ENCODE measurements at regions of chr6 and their contacts with region 1.

Region 1: DNA sequence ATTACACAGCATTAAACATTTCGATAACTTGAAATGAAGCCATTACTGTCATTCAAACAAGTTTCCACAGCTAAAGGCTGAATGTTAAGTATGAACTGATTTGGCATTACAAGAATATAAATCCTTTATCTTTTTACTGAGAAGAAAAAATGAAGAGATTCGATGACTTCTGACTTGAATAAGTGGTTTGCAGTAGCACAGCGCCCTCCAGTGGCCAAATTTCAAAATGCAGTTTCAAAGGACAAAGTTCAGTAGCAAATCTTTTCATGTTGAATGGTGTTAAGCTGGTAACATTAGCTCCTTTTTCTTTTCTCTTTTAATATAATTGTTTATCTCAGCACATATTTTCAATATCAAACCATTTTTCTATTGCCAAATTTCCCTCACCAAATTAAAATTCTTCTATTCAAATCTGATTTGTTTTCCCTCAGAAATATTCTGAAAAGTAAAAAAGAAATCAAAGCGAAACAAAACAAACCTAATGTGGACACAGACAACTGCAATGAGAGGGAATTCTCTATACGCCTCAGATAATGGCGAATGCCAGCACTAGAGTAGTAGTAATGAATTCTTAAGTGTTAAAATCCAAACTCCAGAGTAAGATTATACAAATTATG is 145.7 kb downstream of the BTBD9 start:
- DNase-seq: peak; percentile 57
- H3K4me3 ChIP-seq: no peak overlapping the region
- H3K27ac ChIP-seq: no peak overlapping the region
- H3K4me1 ChIP-seq: no peaks in the 10 kb centered on the region
- CTCF ChIP-seq: peak; percentile 99

Region 2: GRCh38 chr6:37791156-37791919 is 702.7 kb before region 1 on chr6:
- CTCF ChIA-PET with region 1: no interaction called
- POLR2A ChIA-PET with region 1: no interaction called
- intact Hi-C with region 1: loop called (anchors 2 kb)
- DNase-seq: peak; percentile 57
- H3K4me3 ChIP-seq: no peak overlapping the region
- H3K27ac ChIP-seq: no peak overlapping the region
- H3K4me1 ChIP-seq: no peaks in the 10 kb centered on the region
- CTCF ChIP-seq: peak; percentile 87

Region 3: DNA sequence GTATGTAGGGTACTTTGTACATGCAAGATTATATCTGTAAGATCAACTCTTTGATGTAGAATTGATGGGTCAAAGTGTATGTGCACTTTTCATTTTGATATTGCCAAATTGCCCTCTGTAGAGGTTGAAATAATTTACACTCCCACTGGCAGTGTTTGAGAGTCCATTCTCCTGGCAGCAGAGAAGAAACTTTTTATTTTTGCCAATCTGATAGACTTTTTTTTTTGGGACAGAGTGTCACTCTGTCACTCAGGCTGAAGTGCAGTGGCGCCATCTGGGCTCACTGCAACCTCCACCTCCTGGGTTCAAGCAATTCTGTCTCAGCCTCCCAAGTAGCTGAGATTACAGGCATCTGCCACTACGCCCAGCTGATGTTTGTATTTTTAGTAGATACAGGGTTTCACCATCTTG is 475.3 kb before region 1 on chr6:
- CTCF ChIA-PET with region 1: interaction called, 5 read pairs
- POLR2A ChIA-PET with region 1: no interaction called
- intact Hi-C with region 1: loop called (anchors 5 kb)
- DNase-seq: no peak
- H3K4me3 ChIP-seq: no peak overlapping the region
- H3K27ac ChIP-seq: no peak overlapping the region
- H3K4me1 ChIP-seq: no peaks in the 10 kb centered on the region
- CTCF ChIP-seq: no peak

Region 4: DNA sequence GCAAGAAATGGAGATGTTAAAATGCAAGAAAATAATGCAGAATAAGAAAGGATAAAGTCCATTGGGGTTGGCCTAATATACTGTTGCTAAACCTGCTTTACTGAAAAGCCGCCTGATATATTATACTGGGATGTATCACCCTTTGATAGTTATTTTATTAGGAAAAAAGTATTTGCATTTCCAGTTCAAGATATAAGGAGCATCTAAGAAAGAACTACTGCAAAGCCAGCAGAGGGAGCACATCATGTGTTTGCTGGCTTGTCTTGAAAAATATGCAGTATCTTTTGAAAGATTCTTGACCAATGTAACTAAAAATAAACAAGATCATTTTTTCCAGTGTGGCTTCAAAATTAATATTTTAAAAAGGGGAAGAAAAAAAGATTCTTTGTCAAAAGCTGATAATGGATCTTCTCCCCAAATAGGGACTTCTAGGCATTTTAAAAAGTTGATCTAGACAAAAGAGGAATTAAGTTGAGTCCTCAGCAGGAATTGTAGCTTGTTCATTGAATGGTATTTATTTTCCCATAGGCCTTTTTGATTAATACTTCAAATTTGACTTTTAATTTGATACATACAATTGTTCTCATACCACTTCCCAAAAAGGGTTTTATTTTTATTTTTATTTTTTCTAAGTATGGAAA is 459.6 kb before region 1 on chr6:
- CTCF ChIA-PET with region 1: no interaction called
- POLR2A ChIA-PET with region 1: interaction called, 4 read pairs
- intact Hi-C with region 1: loop called (anchors 1 kb)
- DNase-seq: peak; percentile 18
- H3K4me3 ChIP-seq: no peak overlapping the region
- H3K27ac ChIP-seq: no peak overlapping the region
- H3K4me1 ChIP-seq: no peaks in the 10 kb centered on the region
- CTCF ChIP-seq: peak; percentile 79

Region 5: GRCh38 chr6:38234934-38235682 is 258.9 kb before region 1 on chr6:
- CTCF ChIA-PET with region 1: no interaction called
- POLR2A ChIA-PET with region 1: no interaction called
- intact Hi-C with region 1: loop called (anchors 10 kb)
- DNase-seq: no peak
- H3K4me3 ChIP-seq: no peak overlapping the region
- H3K27ac ChIP-seq: no peak overlapping the region
- H3K4me1 ChIP-seq: no peaks in the 10 kb centered on the region
- CTCF ChIP-seq: no peak

Region 6: DNA sequence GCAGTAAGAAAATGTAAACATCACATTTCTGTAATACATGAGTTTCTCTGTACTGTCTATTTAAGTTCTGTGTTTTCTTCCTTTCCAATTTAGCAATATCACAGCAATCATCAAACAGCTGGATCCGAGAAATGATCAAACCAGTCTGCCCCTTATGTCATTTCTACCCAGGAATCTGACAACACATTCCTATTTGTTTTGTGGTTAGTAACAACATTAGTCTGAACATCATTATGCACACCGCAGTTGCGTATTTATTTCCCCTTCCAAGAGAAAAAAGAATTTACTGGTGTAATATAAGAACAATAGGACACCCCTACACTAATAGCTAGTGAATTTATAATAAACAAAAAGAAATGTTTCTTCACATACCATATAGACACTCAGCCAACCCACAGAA is 33.9 kb before region 1 on chr6:
- CTCF ChIA-PET with region 1: no interaction called
- POLR2A ChIA-PET with region 1: no interaction called
- intact Hi-C with region 1: no loop called
- DNase-seq: no peak
- H3K4me3 ChIP-seq: no peak overlapping the region
- H3K27ac ChIP-seq: no peak overlapping the region
- H3K4me1 ChIP-seq: no peaks in the 10 kb centered on the region
- CTCF ChIP-seq: no peak

Region 7: DNA sequence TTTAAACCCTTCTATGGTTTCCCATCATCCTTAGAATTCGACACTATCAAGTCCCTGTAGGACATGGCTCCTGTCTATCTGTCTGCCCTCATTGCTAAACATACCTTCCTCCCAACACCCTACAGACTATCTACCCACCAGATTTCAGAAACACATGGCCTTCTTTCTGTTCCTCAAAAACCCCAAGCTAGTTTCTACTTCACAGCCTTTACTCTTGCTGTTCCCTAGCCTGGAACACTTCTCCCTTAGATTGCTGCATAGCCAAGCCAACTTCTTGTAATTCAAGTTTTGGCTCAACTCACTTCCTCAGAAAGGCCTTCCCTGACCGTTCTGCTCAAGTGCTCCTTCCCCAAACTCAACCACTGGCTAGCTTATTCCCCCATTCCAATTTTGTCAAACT is 10.5 kb before region 1 on chr6:
- CTCF ChIA-PET with region 1: no interaction called
- POLR2A ChIA-PET with region 1: no interaction called
- intact Hi-C with region 1: no loop called
- DNase-seq: no peak
- H3K4me3 ChIP-seq: no peak overlapping the region
- H3K27ac ChIP-seq: no peak overlapping the region
- H3K4me1 ChIP-seq: no peaks in the 10 kb centered on the region
- CTCF ChIP-seq: no peak

Region 8: DNA sequence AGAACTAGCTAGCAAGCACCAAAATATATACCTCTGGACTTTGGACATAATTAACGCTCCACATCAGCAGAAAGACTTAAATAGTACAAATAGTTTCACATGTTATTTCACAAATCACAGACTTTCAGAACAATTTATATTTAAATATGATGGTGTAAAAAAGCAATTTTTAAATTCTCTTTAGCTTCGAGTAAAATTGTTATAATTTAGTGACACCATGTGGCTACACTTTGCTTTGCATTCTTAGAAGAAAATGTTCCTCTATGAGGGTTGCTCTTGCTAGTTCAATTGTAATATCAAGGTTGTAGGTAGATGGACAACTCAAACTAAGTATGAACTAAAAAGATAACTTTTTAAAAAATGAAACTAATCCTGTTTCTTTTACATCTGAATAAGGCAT is 76.7 kb after region 1 on chr6:
- CTCF ChIA-PET with region 1: no interaction called
- POLR2A ChIA-PET with region 1: no interaction called
- intact Hi-C with region 1: loop called (anchors 2 kb)
- DNase-seq: peak; percentile 22
- H3K4me3 ChIP-seq: no peak overlapping the region
- H3K27ac ChIP-seq: no peak overlapping the region
- H3K4me1 ChIP-seq: peaks cover 10% of the 10 kb centered on the region
- CTCF ChIP-seq: peak; percentile 77

Region 9: GRCh38 chr6:38671885-38672467 is 177.9 kb after region 1 on chr6:
- CTCF ChIA-PET with region 1: no interaction called
- POLR2A ChIA-PET with region 1: no interaction called
- intact Hi-C with region 1: loop called (anchors 2 kb)
- DNase-seq: peak; percentile 62
- H3K4me3 ChIP-seq: no peak overlapping the region
- H3K27ac ChIP-seq: no peak overlapping the region
- H3K4me1 ChIP-seq: peaks cover 1% of the 10 kb centered on the region
- CTCF ChIP-seq: peak; percentile 89

Measured in OCI-LY7 (cell line).